ENCODE measurements at regions of chr6 and their contacts with region 1.

Region 1: GRCh38 chr6:70166088-70166958 is 136.6 kb downstream of the COL9A1 start:
- DNase-seq: peak; percentile 29
- H3K4me3 ChIP-seq: no peak overlapping the region
- H3K27ac ChIP-seq: no peak overlapping the region
- H3K4me1 ChIP-seq: no peaks in the 10 kb centered on the region
- H3K27me3 ChIP-seq: peaks cover 2% of the 10 kb centered on the region
- CTCF ChIP-seq: peak; percentile 67 to 76

Region 2: DNA sequence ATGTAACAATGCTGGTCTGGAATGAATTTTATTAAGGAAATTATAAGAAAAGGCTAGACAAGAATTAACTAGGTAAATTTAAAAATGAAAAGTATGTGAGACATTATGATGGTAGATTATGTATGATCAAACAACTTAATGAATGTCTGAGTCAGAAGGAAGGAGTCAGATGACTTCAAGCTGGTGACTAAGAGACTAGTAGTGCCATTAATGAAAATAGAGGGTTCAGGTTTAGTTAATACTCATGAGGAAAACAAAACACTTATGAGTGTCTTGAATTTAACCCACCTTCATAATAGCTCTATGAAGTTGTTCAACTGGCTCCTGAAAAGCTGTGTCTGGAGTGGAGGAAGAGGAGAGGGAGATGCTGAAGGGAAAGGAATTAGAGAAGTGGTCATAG is 1274.9 kb before region 1 on chr6:
- CTCF ChIA-PET with region 1: no interaction called
- dilution Hi-C with region 1: no loop called
- in situ Hi-C with region 1: no loop called
- intact Hi-C with region 1: no loop called
- DNase-seq: no peak
- H3K4me3 ChIP-seq: no peak overlapping the region
- H3K27ac ChIP-seq: no peak overlapping the region
- H3K4me1 ChIP-seq: no peaks in the 10 kb centered on the region
- H3K27me3 ChIP-seq: no peaks in the 10 kb centered on the region
- CTCF ChIP-seq: no peak

Region 3: DNA sequence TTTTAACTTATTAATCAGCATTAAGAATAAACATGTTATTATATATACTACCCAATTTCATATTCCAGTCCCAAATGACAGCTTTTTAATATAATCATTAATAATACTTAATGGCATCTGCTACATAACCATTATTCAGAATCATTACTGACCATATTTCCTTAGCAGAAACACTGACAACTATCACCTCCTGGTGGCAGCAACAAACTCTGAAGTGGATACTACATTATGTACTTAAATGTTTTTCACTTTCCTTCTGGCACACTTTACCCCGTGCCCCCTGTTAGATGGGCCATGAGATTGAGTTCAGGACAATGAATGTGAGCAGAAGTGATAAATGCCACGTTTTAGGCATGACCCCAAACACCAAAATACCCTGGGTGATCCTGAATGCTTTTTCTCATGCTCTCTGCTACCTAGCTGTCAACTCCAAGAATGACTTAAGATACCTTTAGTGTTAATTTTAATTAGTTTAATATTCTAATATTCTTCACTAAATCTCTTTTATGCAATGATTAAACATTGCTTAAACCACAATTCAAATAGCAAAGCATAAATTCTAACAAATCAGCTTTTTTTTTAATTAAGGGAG is 446.6 kb before region 1 on chr6:
- CTCF ChIA-PET with region 1: no interaction called
- dilution Hi-C with region 1: no loop called
- in situ Hi-C with region 1: no loop called
- intact Hi-C with region 1: loop called (anchors 10 kb)
- DNase-seq: peak; percentile 14
- H3K4me3 ChIP-seq: no peak overlapping the region
- H3K27ac ChIP-seq: no peak overlapping the region
- H3K4me1 ChIP-seq: no peaks in the 10 kb centered on the region
- H3K27me3 ChIP-seq: no peaks in the 10 kb centered on the region
- CTCF ChIP-seq: peak; percentile 38 to 55

Measured in mammary epithelial cell (primary cell).